ENCODE measurements at regions of chr16 and their contacts with region 1.

Region 1: GRCh38 chr16:78331731-78332130 is 232.3 kb downstream of the WWOX start:
- DNase-seq: no peak
- ATAC-seq: no peak
- H3K4me3 ChIP-seq: no peak overlapping the region
- H3K27ac ChIP-seq: no peak overlapping the region
- H3K4me1 ChIP-seq: no peaks in the 10 kb centered on the region
- H3K27me3 ChIP-seq: no peaks in the 10 kb centered on the region
- CTCF ChIP-seq: no peak

Region 2: DNA sequence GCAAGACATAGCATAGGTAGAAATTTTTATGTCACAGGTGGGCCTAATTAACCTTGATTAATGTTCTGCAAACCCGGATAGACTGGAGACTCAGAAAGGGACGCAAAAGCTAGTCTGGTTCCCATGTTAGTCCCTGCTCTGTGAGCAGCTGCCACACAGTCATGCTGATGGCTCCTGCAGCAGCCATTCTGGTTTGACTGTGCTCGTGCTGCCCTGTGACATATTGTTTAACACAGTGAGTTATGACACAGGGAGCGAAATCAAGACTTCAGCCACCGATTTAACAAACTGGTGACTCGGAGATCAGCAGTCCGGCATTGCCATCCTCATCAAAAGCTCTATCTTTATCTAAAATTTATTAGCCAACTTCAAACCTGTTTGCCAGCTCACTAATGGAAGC is 62.5 kb before region 1 on chr16:
- intact Hi-C with region 1: no loop called
- DNase-seq: no peak
- ATAC-seq: no peak
- H3K4me3 ChIP-seq: no peak overlapping the region
- H3K27ac ChIP-seq: no peak overlapping the region
- H3K4me1 ChIP-seq: no peaks in the 10 kb centered on the region
- H3K27me3 ChIP-seq: no peaks in the 10 kb centered on the region
- CTCF ChIP-seq: no peak

Region 3: DNA sequence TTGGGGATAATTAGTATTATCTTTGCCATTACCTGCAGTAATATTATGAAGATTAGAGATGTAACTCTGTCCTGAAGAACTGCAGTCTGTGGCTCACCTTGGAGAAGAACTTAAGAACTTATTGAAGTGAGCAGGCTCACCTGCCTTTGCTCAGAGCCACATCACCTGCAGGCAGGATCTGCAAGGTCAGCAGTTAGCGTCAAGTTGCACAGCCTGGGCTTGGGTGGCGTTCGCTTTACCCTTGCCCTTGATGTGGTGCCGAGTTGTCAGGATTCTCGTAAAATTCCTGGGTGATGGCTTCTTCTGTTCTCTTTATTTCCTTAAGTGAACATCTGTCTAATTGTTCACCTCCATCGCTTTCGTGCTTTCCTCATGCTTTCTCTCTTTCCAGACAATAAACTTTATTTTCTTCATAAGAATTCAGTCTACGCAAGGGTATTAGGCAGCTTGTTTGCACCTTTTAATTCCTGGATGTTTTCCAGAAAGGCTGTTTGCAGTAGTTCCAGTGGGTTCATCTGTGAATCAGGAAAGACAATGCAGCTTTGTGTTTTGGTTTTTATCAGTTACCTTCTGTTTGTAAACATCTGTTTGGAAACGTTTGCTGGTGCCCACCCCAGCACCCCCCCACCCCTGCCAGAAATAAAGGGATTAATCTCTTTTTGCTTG is 22.0 kb after region 1 on chr16:
- intact Hi-C with region 1: loop called in 1 of 10 experiments (anchors 2 kb)
- DNase-seq: no peak
- ATAC-seq: no peak
- H3K4me3 ChIP-seq: no peak overlapping the region
- H3K27ac ChIP-seq: no peak overlapping the region
- H3K4me1 ChIP-seq: no peaks in the 10 kb centered on the region
- H3K27me3 ChIP-seq: no peaks in the 10 kb centered on the region
- CTCF ChIP-seq: no peak

Region 4: GRCh38 chr16:78375055-78375679 is 43.4 kb after region 1 on chr16:
- intact Hi-C with region 1: no loop called
- DNase-seq: peak in 1 of 2 donors; percentile 67
- ATAC-seq: peak in 1 of 8 donors; percentile 86
- H3K4me3 ChIP-seq: no peak overlapping the region
- H3K27ac ChIP-seq: no peak overlapping the region
- H3K4me1 ChIP-seq: no peaks in the 10 kb centered on the region
- H3K27me3 ChIP-seq: no peaks in the 10 kb centered on the region
- CTCF ChIP-seq: no peak

Region 5: GRCh38 chr16:78428193-78428592 is 96.5 kb after region 1 on chr16:
- intact Hi-C with region 1: no loop called
- DNase-seq: no peak
- ATAC-seq: no peak
- H3K4me3 ChIP-seq: no peak overlapping the region
- H3K27ac ChIP-seq: no peak overlapping the region
- H3K4me1 ChIP-seq: no peaks in the 10 kb centered on the region
- H3K27me3 ChIP-seq: no peaks in the 10 kb centered on the region
- CTCF ChIP-seq: no peak

Region 6: GRCh38 chr16:79163691-79164387 is 832.1 kb after region 1 on chr16:
- intact Hi-C with region 1: no loop called
- DNase-seq: no peak
- ATAC-seq: peak in 3 of 8 donors; percentile 9 to 47 (median 29)
- H3K4me3 ChIP-seq: peak overlapping the region in 1 of 10 donors; percentile 20
- H3K27ac ChIP-seq: peak overlapping the region in 1 of 10 donors; percentile 47
- H3K4me1 ChIP-seq: peaks cover 0 to 13% (median 0%) of the 10 kb centered on the region in 9 donors
- H3K27me3 ChIP-seq: no peaks in the 10 kb centered on the region
- CTCF ChIP-seq: no peak

Measured in heart right ventricle (tissue), 16 donors.